CD4-positive, alpha-beta T cell (primary cell): ENCODE measurements at regions of chr1 and their contacts with region 1.

Region 1: DNA sequence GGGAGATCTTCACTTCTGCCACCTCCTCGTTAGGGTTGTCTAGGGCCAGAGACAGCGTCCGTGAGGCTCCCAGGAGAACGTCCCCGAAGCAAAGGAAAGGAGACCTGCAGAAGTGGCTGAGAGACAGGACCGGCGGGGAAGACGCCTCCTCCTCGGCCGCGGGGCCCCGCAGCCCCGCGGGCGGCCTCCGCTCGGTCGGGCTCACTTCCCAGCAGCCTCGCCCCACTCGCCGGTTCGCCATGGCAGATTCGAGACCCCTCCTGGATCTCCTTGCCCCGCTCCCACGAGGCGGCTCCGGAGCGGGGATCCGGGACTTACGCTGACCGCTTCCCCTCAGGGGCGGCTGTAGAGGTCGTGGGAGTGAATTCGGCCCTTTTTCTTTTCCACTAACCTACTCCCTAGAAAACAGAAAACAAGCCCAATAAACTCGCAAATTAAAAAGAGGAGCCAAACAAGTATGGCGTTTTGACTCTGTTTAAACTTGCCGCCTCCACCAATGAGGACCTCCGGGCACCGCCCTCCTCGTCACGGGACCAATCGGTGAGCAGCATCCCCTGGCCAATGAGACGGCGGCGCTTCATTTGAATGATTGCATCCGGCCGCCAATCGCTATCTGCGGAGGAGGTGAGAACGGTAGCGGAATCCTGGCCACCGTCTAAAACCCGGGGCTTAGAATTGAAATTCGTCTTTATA is at the start of gene ASPM:
- DNase-seq: peak; percentile 88 to 97 (median 92)
- ATAC-seq: peak; percentile 98
- H3K4me3 ChIP-seq: peak within 1 kb of the TSS; percentile 59
- H3K4me3 Mint-ChIP-seq: peak within 1 kb of the TSS; percentile 87
- H3K27ac ChIP-seq: peak within 1 kb of the TSS; percentile 51 to 66
- H3K27ac Mint-ChIP-seq: peak within 1 kb of the TSS; percentile 86
- H3K4me1 ChIP-seq: peaks cover 6% of the 10 kb centered on the region
- H3K4me1 Mint-ChIP-seq: peaks cover 16% of the 10 kb centered on the region
- H3K27me3 ChIP-seq: peaks cover 0 to 6% of the 10 kb centered on the region in 2 experiments
- H3K27me3 Mint-ChIP-seq: peaks cover 7% of the 10 kb centered on the region
- CTCF ChIP-seq: no peak
- total RNA-seq, gene ASPM: 0.25 to 0.36 TPM

Region 2: DNA sequence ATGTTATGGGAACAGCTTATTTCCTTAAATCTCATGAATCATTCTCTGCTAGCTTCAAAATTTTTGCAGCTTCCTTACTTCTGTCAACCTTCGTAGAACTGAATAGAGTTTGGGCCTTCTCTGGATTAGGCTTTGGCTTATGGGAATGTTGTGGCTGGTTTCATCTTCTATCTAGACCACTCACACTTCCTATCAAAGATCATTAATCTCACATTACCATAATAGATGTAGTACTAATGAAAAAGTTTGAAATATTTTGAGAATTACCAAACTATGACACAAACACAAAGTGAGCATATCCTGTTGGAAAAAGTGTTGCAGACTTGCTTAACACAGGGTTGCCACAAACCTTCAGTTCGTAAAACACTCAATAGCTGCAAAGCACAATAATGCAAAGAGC is 30.2 kb before region 1 on chr1:
- CTCF ChIA-PET with region 1: no interaction called
- POLR2A ChIA-PET with region 1: no interaction called
- intact Hi-C with region 1: no loop called
- DNase-seq: no peak
- ATAC-seq: no peak
- H3K4me3 ChIP-seq: no peak overlapping the region
- H3K4me3 Mint-ChIP-seq: no peak overlapping the region
- H3K27ac ChIP-seq: no peak overlapping the region
- H3K27ac Mint-ChIP-seq: no peak overlapping the region
- H3K4me1 ChIP-seq: no peaks in the 10 kb centered on the region
- H3K4me1 Mint-ChIP-seq: no peaks in the 10 kb centered on the region
- H3K27me3 ChIP-seq: no peaks in the 10 kb centered on the region
- H3K27me3 Mint-ChIP-seq: no peaks in the 10 kb centered on the region
- CTCF ChIP-seq: no peak

Region 3: GRCh38 chr1:197197430-197197997 is 51.2 kb after region 1 on chr1:
- CTCF ChIA-PET with region 1: no interaction called
- POLR2A ChIA-PET with region 1: no interaction called
- intact Hi-C with region 1: loop called in 1 of 2 experiments (anchors 2 kb)
- DNase-seq: no peak
- ATAC-seq: no peak
- H3K4me3 ChIP-seq: peak overlapping the region; percentile 1
- H3K4me3 Mint-ChIP-seq: peak overlapping the region; percentile 69
- H3K27ac ChIP-seq: no peak overlapping the region
- H3K27ac Mint-ChIP-seq: no peak overlapping the region
- H3K4me1 ChIP-seq: peaks cover 9% of the 10 kb centered on the region
- H3K4me1 Mint-ChIP-seq: peaks cover 84% of the 10 kb centered on the region
- H3K27me3 ChIP-seq: no peaks in the 10 kb centered on the region
- H3K27me3 Mint-ChIP-seq: no peaks in the 10 kb centered on the region
- CTCF ChIP-seq: no peak

Region 4: DNA sequence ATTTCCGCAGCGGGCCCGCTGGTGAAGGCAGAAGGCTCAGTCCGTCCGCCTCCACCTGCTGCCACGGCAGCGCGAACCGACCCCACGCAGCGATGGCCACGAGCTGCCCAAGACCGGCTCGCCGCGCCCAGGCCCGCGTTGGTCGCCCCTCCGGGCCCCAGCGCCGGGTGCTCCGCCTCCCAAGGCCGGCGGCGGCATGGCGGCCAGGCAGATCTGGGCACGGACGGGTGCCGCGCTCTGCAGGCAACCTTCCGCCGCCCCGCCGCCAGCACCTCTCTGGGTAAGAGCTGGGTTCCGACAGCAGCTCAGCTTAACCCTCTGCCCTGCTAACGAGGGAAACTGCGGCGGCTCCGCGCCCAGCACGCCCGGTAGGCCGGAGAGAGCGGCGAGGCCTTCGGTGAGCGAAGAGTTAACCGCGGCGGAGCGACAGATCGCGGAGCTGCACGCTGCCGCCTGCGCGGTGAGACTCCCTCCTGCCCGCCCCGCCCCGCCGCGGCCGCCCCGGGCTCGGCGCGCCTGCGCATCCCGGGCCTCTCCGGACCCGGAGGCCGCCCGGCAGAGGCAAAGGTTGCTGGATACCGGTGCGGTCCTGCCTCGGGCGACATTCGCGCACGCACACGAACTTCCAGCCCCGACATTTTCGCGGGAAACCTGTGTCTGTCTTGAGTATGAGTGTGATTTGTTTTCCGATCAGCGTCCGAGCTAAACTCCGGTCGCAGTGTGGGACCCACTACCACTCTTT is 756.3 kb after region 1 on chr1 and contains the start of gene C1orf53:
- CTCF ChIA-PET with region 1: no interaction called
- POLR2A ChIA-PET with region 1: no interaction called
- intact Hi-C with region 1: loop called in 1 of 2 experiments (anchors 10 kb)
- DNase-seq: peak; percentile 40 to 87 (median 66)
- ATAC-seq: peak; percentile 89
- H3K4me3 ChIP-seq: peak within 1 kb of the TSS; percentile 59
- H3K4me3 Mint-ChIP-seq: peak within 1 kb of the TSS; percentile 97
- H3K27ac ChIP-seq: peak within 1 kb of the TSS in 1 of 2 donors; percentile 30
- H3K27ac Mint-ChIP-seq: peak within 1 kb of the TSS; percentile 79
- H3K4me1 ChIP-seq: peaks cover 11% of the 10 kb centered on the region
- H3K4me1 Mint-ChIP-seq: peaks cover 14% of the 10 kb centered on the region
- H3K27me3 ChIP-seq: peaks cover 18 to 48% of the 10 kb centered on the region in 2 experiments
- H3K27me3 Mint-ChIP-seq: peaks cover 54% of the 10 kb centered on the region
- CTCF ChIP-seq: no peak
- total RNA-seq, gene C1orf53: not detected